Activated T-helper 2 cell treated with anti-CD3 and anti-CD28 coated beads, Interferon-gamma antibody, Interleukin-2, Interleukin-4, amounts not matched to agents 10 μg/mL and 5 μg/mL and 100 μg/mL, durations not matched to agents 14 hours and 24 hours and 36 hours (primary cell): ENCODE measurements at regions of chr2 and their contacts with region 1.

Region 1: GRCh38 chr2:161946489-161947107 is 127.4 kb downstream of the DPP4 start:
- DNase-seq: no peak
- H3K4me3 Mint-ChIP-seq: no peak overlapping the region
- H3K27ac Mint-ChIP-seq: no peak overlapping the region
- H3K4me1 Mint-ChIP-seq: peaks cover 33% of the 10 kb centered on the region
- H3K27me3 Mint-ChIP-seq: peaks cover 9% of the 10 kb centered on the region

Region 2: DNA sequence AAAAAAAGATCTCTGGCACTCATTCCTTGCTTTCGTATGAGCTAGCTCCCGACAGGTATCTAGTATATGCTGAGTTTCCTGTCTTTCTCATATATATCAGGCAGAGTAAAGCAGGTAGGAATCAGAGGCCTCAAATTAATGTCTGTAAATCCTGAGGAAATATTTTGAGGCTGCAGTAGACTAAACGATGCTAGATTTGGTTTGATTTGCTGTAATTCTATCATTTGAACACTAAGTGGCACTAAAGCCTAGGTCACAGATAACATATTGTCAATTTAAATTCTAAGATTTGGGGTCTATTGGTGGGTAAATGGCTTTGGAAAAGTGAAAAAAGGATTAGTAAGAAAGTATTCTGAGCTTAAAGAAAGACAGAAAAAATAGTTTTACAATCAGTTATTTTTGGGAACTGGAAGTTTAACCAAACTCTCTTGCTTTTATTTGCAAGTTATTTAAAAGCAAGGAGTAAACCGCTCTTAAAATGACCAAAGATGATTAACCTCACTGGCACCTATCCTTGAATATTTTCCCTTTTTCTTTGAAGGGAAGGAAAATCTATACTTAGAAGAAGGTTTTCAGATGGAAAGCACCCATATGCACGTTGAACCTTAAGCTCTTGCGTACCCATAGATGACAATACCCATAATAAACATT is 360.0 kb before region 1 on chr2:
- intact Hi-C with region 1: loop called (anchors 1 kb)
- DNase-seq: no peak
- H3K4me3 Mint-ChIP-seq: no peak overlapping the region
- H3K27ac Mint-ChIP-seq: no peak overlapping the region
- H3K4me1 Mint-ChIP-seq: no peaks in the 10 kb centered on the region
- H3K27me3 Mint-ChIP-seq: peaks cover 23% of the 10 kb centered on the region

Region 3: GRCh38 chr2:161754379-161754778 is 192.2 kb before region 1 on chr2:
- intact Hi-C with region 1: loop called (anchors 10 kb)
- DNase-seq: no peak
- H3K4me3 Mint-ChIP-seq: no peak overlapping the region
- H3K27ac Mint-ChIP-seq: no peak overlapping the region
- H3K4me1 Mint-ChIP-seq: no peaks in the 10 kb centered on the region
- H3K27me3 Mint-ChIP-seq: peaks cover 9% of the 10 kb centered on the region

Region 4: GRCh38 chr2:162174746-162175145 is 228.1 kb after region 1 on chr2:
- intact Hi-C with region 1: no loop called
- DNase-seq: no peak
- H3K4me3 Mint-ChIP-seq: no peak overlapping the region
- H3K27ac Mint-ChIP-seq: no peak overlapping the region
- H3K4me1 Mint-ChIP-seq: no peaks in the 10 kb centered on the region
- H3K27me3 Mint-ChIP-seq: peaks cover 30% of the 10 kb centered on the region

Region 5: GRCh38 chr2:162370931-162371330 is 424.3 kb after region 1 on chr2:
- intact Hi-C with region 1: no loop called
- DNase-seq: no peak
- H3K4me3 Mint-ChIP-seq: no peak overlapping the region
- H3K27ac Mint-ChIP-seq: no peak overlapping the region
- H3K4me1 Mint-ChIP-seq: no peaks in the 10 kb centered on the region
- H3K27me3 Mint-ChIP-seq: no peaks in the 10 kb centered on the region